Gastrocnemius medialis (tissue), 4 donors: ENCODE measurements at regions of chr15 and their contacts with region 1.

Region 1: DNA sequence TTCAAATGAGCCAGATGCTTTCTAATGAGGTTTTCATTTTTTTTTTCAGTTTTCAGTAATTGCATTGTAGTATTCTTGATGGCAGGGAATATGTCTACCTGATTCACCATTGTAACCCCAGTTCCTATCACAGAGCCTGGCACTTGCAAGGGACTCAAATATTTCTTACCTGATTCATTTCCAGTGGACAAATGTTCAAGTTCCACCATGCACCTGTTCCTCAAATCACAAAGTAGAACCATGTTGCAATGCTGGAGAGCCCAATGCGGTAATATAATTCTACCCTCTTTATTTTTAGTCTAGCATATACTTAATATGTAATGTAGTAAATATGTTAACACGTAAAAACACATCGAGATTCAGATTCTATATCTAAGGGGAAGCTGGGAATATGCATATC is 722.6 kb downstream of the AGBL1 start:
- DNase-seq: peak; percentile 19 to 21
- ATAC-seq: peak; percentile 89 to 97
- H3K4me3 ChIP-seq: no peak overlapping the region
- H3K27ac ChIP-seq: peak overlapping the region in 2 of 4 donors; percentile 19 to 40
- H3K4me1 ChIP-seq: peaks cover 0 to 14% of the 10 kb centered on the region in 2 donors
- H3K27me3 ChIP-seq: no peaks in the 10 kb centered on the region
- CTCF ChIP-seq: no peak
- POLR2A ChIP-seq: no peak

Region 2: GRCh38 chr15:86756692-86757091 is 45.6 kb before region 1 on chr15:
- in situ Hi-C with region 1: no loop called
- intact Hi-C with region 1: no loop called
- DNase-seq: no peak
- ATAC-seq: no peak
- H3K4me3 ChIP-seq: no peak overlapping the region
- H3K27ac ChIP-seq: no peak overlapping the region
- H3K4me1 ChIP-seq: peaks cover 14 to 28% of the 10 kb centered on the region in 2 donors
- H3K27me3 ChIP-seq: no peaks in the 10 kb centered on the region
- CTCF ChIP-seq: no peak
- POLR2A ChIP-seq: no peak

Region 3: DNA sequence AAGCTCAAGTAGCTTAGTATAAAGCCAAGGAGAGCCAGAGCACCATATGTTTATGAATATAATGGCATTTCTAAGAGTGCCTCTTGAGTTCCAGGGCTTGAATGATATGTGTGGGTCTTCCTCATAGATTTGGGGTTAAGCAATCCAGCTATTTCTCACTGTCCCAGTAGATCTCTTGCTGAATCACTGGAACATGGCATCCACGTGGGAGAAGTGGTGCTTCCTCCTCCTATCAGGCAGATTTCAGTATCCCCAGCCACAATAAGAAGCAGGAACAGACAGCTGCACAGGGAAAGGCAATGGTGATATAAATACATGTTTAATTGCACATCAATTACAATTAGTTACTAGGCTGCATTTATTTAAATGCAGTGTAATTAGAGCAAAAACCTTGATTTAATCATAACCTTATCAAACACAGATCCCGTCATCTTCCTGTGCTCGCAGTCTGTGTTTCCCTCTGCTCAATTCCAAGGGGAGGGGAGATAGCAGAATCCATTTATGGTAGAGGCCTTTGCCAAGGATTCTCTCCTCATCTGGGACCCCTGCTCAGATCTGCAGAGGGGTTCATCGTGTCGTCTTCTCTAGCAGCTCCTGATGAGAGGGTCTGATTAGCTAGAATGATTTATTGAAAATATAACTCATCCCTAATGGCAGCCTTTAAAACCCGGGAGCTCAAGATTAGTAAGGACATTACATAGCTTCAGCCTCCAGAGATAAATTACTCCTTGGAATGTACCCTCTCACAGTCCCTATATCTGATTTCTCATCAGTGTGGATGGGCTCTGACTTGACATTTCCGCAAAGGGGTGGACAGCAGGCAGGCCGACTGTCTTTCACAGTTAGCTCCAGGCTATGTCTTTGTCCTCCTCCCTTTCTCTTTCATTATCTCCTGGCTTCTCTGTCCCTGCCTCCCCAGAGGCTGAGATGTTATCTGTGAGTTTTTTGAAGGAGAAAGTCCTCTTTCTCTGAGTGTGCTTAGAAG is 53.4 kb after region 1 on chr15:
- in situ Hi-C with region 1: no loop called
- intact Hi-C with region 1: loop called (anchors 2 kb)
- DNase-seq: peak in 1 of 2 donors; percentile 47
- ATAC-seq: peak; percentile 63 to 71
- H3K4me3 ChIP-seq: no peak overlapping the region
- H3K27ac ChIP-seq: peak overlapping the region in 3 of 4 donors; percentile 68 to 77 (median 74)
- H3K4me1 ChIP-seq: peaks cover 32 to 41% of the 10 kb centered on the region in 2 donors
- H3K27me3 ChIP-seq: no peaks in the 10 kb centered on the region
- CTCF ChIP-seq: no peak
- POLR2A ChIP-seq: peak in 1 of 2 donors; percentile 9

Region 4: DNA sequence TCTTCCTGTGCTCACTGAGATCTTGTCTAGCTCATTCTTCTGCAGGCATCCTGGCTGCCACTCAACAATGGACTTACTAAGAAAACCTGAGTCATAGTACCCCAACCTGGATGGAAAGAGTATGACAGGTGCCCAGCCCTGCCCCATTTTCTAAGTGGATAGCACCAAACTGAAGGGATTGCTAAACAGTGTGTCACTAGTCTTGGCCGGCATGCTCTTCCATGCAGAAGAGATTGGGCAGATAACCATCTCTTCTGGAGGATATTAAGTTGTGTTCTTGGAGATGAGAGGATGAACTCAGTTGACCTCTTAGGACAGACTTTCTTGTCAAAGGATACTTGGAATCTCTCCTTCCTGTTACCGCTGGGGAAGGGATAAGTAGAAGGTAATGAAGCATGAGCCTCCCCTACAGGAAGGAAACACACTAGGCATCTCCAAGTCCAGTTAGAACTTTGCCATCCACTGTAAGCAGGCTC is 75.0 kb after region 1 on chr15:
- in situ Hi-C with region 1: no loop called
- intact Hi-C with region 1: loop called (anchors 5 kb)
- DNase-seq: peak; percentile 15 to 34
- ATAC-seq: peak; percentile 73 to 78
- H3K4me3 ChIP-seq: no peak overlapping the region
- H3K27ac ChIP-seq: no peak overlapping the region
- H3K4me1 ChIP-seq: peaks cover 15 to 25% of the 10 kb centered on the region in 2 donors
- H3K27me3 ChIP-seq: no peaks in the 10 kb centered on the region
- CTCF ChIP-seq: peak; percentile 12 to 50 (median 37)
- POLR2A ChIP-seq: no peak

Region 5: DNA sequence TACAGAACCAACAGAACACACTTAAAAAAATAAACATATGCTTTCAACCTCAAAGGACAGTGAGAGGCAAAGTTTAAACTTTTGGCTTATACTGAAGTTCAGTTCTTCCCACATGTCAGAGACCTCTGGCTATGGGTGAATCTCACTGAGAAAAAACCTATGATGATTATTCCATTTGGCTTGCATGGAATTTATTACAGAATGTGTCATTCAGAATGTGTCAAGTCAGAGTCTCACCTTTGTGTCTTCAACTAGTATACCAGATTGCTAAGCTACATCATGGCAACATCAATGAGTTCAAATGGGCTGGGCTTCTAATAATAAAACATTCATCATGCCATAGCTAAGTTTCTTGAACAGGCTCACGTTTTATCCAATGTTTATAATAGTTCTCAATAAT is 467.3 kb after region 1 on chr15:
- in situ Hi-C with region 1: no loop called
- intact Hi-C with region 1: no loop called
- DNase-seq: no peak
- ATAC-seq: no peak
- H3K4me3 ChIP-seq: no peak overlapping the region
- H3K27ac ChIP-seq: no peak overlapping the region
- H3K4me1 ChIP-seq: no peaks in the 10 kb centered on the region
- H3K27me3 ChIP-seq: no peaks in the 10 kb centered on the region
- CTCF ChIP-seq: no peak
- POLR2A ChIP-seq: no peak